Naive thymus-derived CD4-positive, alpha-beta T cell (primary cell): ENCODE measurements at regions of chr11 and their contacts with region 1.

Region 1: GRCh38 chr11:68459886-68460740 is 439 bp upstream of the PPP6R3 start:
- DNase-seq: peak; percentile 90 to 97 (median 96)
- ATAC-seq: peak; percentile 95
- H3K4me3 ChIP-seq: peak overlapping the region; percentile 86
- H3K4me3 Mint-ChIP-seq: peak overlapping the region; percentile 81 to 98 (median 96)
- H3K27ac ChIP-seq: peak overlapping the region; percentile 90
- H3K27ac Mint-ChIP-seq: peak overlapping the region; percentile 92 to 99 (median 99)
- H3K4me1 ChIP-seq: peaks cover 19 to 26% of the 10 kb centered on the region in 2 donors
- H3K4me1 Mint-ChIP-seq: peaks cover 26 to 45% (median 31%) of the 10 kb centered on the region in 7 donors
- H3K27me3 ChIP-seq: no peaks in the 10 kb centered on the region
- H3K27me3 Mint-ChIP-seq: peaks cover 0 to 2% (median 0%) of the 10 kb centered on the region in 5 donors

Region 2: DNA sequence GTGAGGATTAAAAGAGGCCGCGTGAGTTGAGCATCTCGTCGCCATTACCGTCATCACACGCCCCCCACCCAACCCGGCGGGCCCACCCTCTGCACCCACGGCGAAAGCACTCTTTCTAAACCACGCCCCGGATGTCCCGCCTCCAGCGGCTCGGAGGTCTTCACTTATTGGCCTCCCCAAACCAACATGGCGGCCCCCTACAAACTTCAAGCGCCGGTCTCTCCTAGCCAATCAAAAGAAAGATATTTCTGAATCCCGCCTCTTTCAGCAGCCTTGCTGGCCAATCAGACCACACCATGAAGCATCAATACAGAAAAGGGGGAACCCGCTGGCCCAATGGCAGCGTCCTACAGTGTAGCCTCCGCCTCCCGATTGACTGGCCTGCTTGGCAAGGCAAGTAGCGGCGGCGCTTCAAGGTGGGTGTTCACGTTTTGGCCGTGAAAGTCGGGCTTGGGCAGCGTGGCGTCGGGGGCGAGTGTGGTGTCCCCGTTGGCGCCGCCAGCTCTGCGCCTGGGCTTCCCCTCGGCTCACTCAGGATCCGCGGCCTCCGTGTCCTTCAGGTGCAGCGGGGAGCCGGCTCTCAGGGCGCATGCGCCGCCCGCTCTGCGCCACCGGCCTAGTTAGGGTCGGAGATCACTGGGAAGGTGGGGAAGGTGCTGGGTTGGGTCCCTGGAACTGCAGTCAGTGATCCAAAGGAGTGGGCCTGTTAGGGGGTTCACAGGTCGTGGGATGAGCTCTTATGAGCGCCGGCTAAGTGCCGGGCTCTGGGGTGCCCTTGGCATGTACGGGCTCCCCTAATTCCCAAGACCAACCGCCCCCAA is 429.6 kb before region 1 on chr11 and contains the start of gene NDUFS8:
- CTCF ChIA-PET with region 1: no interaction called
- POLR2A ChIA-PET with region 1: no interaction called
- intact Hi-C with region 1: loop called (anchors 1 to 2 kb)
- DNase-seq: peak; percentile 83 to 99 (median 98)
- ATAC-seq: peak; percentile 98
- H3K4me3 ChIP-seq: peak within 1 kb of the TSS; percentile 98
- H3K4me3 Mint-ChIP-seq: peak within 1 kb of the TSS; percentile 90 to 99 (median 96)
- H3K27ac ChIP-seq: peak within 1 kb of the TSS; percentile 97
- H3K27ac Mint-ChIP-seq: peak within 1 kb of the TSS; percentile 73 to 98 (median 92)
- H3K4me1 ChIP-seq: peaks cover 11 to 16% of the 10 kb centered on the region in 2 donors
- H3K4me1 Mint-ChIP-seq: peaks cover 12 to 32% (median 23%) of the 10 kb centered on the region in 7 donors
- H3K27me3 ChIP-seq: no peaks in the 10 kb centered on the region
- H3K27me3 Mint-ChIP-seq: no peaks in the 10 kb centered on the region
- total RNA-seq, gene NDUFS8: 67.1 to 126 (median 80.1) TPM

Region 3: DNA sequence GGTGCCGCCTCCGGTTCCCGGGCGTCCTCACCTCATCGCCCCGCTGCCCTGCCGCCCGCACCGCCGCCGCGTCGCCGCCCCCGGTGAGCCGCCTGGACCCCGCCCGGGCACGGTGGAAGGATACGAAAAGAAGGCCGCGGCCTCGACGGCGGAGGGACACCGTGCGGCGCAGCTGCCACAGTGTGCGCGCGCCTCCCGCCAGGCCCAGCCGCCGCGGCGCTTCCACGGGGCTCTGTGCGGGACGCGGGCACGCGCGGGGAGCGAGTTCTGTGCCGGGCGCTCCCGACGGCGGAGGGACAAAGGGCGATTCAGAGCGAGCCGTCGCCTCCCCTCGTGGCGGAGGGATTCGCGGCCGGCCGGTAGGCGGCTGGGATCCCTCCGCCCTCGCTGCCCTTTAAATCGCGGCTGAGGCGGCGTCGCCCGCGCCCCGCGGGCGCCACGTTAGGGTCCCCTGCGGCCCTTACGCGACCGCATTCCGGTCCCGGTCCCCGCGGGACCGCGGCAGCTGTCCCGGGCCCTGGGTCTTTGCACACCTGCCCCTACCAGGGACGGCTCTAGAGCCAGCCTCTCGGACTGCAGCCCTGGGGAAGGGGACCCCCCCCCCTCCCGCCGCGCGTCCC is 246.4 kb before region 1 on chr11:
- CTCF ChIA-PET with region 1: no interaction called
- POLR2A ChIA-PET with region 1: no interaction called
- intact Hi-C with region 1: loop called (anchors 1 to 5 kb)
- DNase-seq: peak; percentile 69 to 92 (median 86)
- ATAC-seq: peak; percentile 70
- H3K4me3 ChIP-seq: peak overlapping the region; percentile 81
- H3K4me3 Mint-ChIP-seq: peak overlapping the region; percentile 69 to 98 (median 78)
- H3K27ac ChIP-seq: peak overlapping the region; percentile 88
- H3K27ac Mint-ChIP-seq: peak overlapping the region in 7 of 9 donors; percentile 35 to 99 (median 92)
- H3K4me1 ChIP-seq: peaks cover 27% of the 10 kb centered on the region in 2 donors
- H3K4me1 Mint-ChIP-seq: peaks cover 35 to 50% (median 45%) of the 10 kb centered on the region in 7 donors
- H3K27me3 ChIP-seq: no peaks in the 10 kb centered on the region
- H3K27me3 Mint-ChIP-seq: peaks cover 0 to 28% (median 0%) of the 10 kb centered on the region in 5 donors

Region 4: GRCh38 chr11:68398995-68399851 is 60.9 kb before region 1 on chr11:
- CTCF ChIA-PET with region 1: no interaction called
- POLR2A ChIA-PET with region 1: no interaction called
- intact Hi-C with region 1: no loop called
- DNase-seq: no peak
- ATAC-seq: no peak
- H3K4me3 ChIP-seq: no peak overlapping the region
- H3K4me3 Mint-ChIP-seq: no peak overlapping the region
- H3K27ac ChIP-seq: no peak overlapping the region
- H3K27ac Mint-ChIP-seq: no peak overlapping the region
- H3K4me1 ChIP-seq: no peaks in the 10 kb centered on the region
- H3K4me1 Mint-ChIP-seq: peaks cover 0 to 2% (median 0%) of the 10 kb centered on the region in 7 donors
- H3K27me3 ChIP-seq: no peaks in the 10 kb centered on the region
- H3K27me3 Mint-ChIP-seq: no peaks in the 10 kb centered on the region

Region 5: DNA sequence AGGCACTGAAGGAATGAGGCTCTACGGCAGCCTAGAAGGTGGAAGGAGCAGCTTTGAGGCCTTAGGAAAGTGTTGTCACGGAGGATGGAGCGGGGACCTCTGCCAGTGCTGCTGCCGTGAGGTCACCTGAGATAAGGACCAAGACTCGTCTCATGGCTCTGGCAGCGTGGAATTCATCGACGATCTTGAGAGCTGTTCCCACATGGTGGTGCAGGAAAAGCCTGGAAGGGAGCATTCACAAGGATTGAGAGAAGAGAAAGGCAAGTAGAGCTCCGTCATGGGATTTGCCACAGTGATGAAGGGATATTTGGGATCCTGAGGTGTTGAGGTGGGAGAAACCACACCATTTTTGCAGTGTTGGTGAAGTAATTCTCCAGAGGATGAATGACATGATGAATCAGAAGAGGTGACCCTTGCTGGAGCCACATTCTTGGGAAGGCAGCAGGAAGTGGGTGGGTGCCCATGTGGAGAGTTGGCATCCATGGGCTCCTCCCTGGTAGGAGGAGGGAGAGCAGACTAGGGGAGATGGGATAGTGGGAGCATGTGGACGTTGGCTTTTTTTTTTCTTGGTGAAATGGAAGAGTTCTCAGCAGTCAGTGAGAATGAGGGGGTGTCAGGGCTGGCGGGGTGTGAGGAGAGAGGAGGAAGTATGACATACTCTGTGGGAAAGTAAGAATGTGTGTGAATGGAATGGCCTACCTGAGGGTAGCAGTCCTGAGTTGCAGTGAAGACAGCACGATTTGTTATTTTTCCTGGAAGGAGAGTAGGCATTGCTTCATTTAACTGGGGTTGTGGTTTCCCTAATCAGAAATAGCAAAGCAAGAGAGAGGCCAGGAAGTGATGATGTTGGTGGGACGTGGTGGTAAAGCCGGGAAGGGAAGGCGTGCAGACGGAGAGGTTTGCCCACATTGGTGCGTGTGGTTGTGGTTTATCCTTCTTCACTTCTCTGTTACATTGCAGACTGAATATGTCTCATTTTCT is 11.5 kb after region 1 on chr11:
- CTCF ChIA-PET with region 1: no interaction called
- POLR2A ChIA-PET with region 1: interaction called, 4 read pairs
- intact Hi-C with region 1: loop called (anchors 1 kb)
- DNase-seq: peak in 8 of 9 donors; percentile 28 to 63 (median 53)
- ATAC-seq: peak; percentile 84
- H3K4me3 ChIP-seq: peak overlapping the region; percentile 51
- H3K4me3 Mint-ChIP-seq: peak overlapping the region; percentile 68 to 87 (median 84)
- H3K27ac ChIP-seq: peak overlapping the region; percentile 53
- H3K27ac Mint-ChIP-seq: peak overlapping the region; percentile 74 to 94 (median 84)
- H3K4me1 ChIP-seq: peaks cover 60 to 64% of the 10 kb centered on the region in 2 donors
- H3K4me1 Mint-ChIP-seq: peaks cover 61 to 83% (median 76%) of the 10 kb centered on the region in 7 donors
- H3K27me3 ChIP-seq: no peaks in the 10 kb centered on the region
- H3K27me3 Mint-ChIP-seq: no peaks in the 10 kb centered on the region

Region 6: GRCh38 chr11:68550485-68550817 is 90.3 kb after region 1 on chr11:
- CTCF ChIA-PET with region 1: no interaction called
- POLR2A ChIA-PET with region 1: no interaction called
- intact Hi-C with region 1: loop called in 1 of 2 experiments (anchors 5 kb)
- DNase-seq: peak in 5 of 9 donors; percentile 13 to 44 (median 13)
- ATAC-seq: peak; percentile 57
- H3K4me3 ChIP-seq: no peak overlapping the region
- H3K4me3 Mint-ChIP-seq: peak overlapping the region; percentile 57 to 78 (median 69)
- H3K27ac ChIP-seq: peak overlapping the region; percentile 52
- H3K27ac Mint-ChIP-seq: peak overlapping the region; percentile 15 to 90 (median 79)
- H3K4me1 ChIP-seq: peaks cover 11 to 22% of the 10 kb centered on the region in 2 donors
- H3K4me1 Mint-ChIP-seq: peaks cover 50 to 91% (median 75%) of the 10 kb centered on the region in 7 donors
- H3K27me3 ChIP-seq: no peaks in the 10 kb centered on the region
- H3K27me3 Mint-ChIP-seq: no peaks in the 10 kb centered on the region

Region 7: GRCh38 chr11:68839054-68839865 is 379.1 kb after region 1 on chr11:
- CTCF ChIA-PET with region 1: no interaction called
- POLR2A ChIA-PET with region 1: no interaction called
- intact Hi-C with region 1: loop called (anchors 1 to 5 kb)
- DNase-seq: peak; percentile 87 to 94 (median 92)
- ATAC-seq: peak; percentile 88
- H3K4me3 ChIP-seq: peak overlapping the region; percentile 81
- H3K4me3 Mint-ChIP-seq: peak overlapping the region; percentile 85 to 93 (median 90)
- H3K27ac ChIP-seq: peak overlapping the region; percentile 73
- H3K27ac Mint-ChIP-seq: peak overlapping the region; percentile 81 to 95 (median 93)
- H3K4me1 ChIP-seq: peaks cover 49% of the 10 kb centered on the region in 2 donors
- H3K4me1 Mint-ChIP-seq: peaks cover 31 to 70% (median 52%) of the 10 kb centered on the region in 7 donors
- H3K27me3 ChIP-seq: no peaks in the 10 kb centered on the region
- H3K27me3 Mint-ChIP-seq: peaks cover 0 to 2% (median 0%) of the 10 kb centered on the region in 5 donors

Region 8: DNA sequence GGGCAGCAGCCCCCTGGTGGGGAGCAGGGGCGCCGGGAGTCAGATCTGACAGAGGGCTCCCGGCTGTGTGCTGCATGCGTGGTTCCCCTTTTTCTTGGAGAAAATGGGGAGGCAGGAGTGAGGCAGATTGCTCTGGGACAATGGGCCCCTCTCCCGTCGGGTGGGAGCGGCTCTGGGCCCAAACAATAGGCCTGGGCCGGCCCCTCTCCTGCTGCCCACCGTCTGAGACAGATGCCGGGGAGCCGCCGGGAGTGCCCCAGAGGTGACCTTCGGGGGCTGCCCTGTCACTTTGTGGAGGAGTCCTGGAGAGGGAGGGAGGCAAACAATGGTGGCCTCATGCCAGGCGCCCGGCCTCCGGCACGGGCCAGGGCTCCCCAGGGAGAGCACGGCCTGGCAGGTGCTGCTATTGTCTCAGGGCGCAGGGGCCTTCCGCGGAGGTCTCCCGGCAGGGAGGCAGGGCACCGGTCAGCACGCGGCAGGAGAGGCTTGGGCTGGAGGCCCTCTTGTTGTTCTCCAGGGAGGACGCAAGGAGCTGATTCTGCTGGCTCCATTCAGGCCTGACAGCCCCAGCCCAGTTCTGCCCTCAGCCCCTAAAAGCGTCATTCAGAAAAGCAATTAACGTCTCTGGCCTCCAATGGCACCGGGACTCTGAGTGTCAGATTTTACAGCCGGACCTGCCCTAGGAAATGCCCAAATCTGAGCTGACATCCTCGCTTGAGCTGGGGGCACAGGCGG is 740.4 kb after region 1 on chr11:
- CTCF ChIA-PET with region 1: no interaction called
- POLR2A ChIA-PET with region 1: no interaction called
- intact Hi-C with region 1: no loop called
- DNase-seq: no peak
- ATAC-seq: no peak
- H3K4me3 ChIP-seq: no peak overlapping the region
- H3K4me3 Mint-ChIP-seq: no peak overlapping the region
- H3K27ac ChIP-seq: no peak overlapping the region
- H3K27ac Mint-ChIP-seq: no peak overlapping the region
- H3K4me1 ChIP-seq: no peaks in the 10 kb centered on the region
- H3K4me1 Mint-ChIP-seq: peaks cover 0 to 13% (median 0%) of the 10 kb centered on the region in 7 donors
- H3K27me3 ChIP-seq: no peaks in the 10 kb centered on the region
- H3K27me3 Mint-ChIP-seq: peaks cover 0 to 5% (median 0%) of the 10 kb centered on the region in 5 donors

Region 9: DNA sequence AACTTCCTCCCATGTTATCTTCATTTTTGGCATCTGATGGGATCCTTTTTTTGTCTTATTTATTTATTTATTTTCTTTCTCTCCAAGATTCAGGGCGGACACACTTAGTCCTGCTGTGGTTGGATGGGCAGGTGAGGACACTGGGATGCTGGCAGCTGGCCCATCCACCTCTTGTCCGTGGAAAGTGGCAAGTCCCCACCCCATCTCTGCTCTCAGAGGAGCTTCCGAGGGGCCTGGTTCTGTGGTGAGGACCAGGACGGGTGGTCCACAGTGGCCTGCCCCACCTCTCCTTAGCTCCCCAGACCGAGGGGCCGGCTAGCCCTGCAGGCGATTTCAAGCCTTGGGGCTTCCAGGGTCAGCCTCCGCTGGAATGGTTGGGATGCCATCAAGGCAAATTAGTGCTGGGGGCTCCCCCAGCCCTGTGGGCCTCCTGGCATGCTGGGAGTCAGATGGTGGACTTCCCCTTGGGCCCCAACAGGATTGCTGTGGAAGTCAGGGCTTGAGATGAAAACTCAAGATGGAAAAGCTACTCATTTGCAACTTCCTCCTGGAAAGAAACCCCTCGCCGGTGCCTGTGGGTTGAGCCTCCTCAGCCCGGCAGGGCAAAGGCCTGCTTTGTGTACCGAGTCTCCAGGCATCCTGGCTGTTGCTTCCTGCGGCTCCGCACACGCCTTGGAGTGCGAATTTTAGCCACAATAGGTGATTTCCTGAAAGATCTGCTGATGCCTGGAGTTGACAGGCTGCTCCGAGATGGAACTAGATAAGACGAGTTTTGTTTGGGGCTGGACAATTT is 990.1 kb after region 1 on chr11:
- CTCF ChIA-PET with region 1: no interaction called
- POLR2A ChIA-PET with region 1: no interaction called
- intact Hi-C with region 1: no loop called
- DNase-seq: no peak
- ATAC-seq: no peak
- H3K4me3 ChIP-seq: no peak overlapping the region
- H3K4me3 Mint-ChIP-seq: no peak overlapping the region
- H3K27ac ChIP-seq: no peak overlapping the region
- H3K27ac Mint-ChIP-seq: no peak overlapping the region
- H3K4me1 ChIP-seq: no peaks in the 10 kb centered on the region
- H3K4me1 Mint-ChIP-seq: peaks cover 0 to 6% (median 0%) of the 10 kb centered on the region in 7 donors
- H3K27me3 ChIP-seq: no peaks in the 10 kb centered on the region
- H3K27me3 Mint-ChIP-seq: peaks cover 11 to 23% (median 19%) of the 10 kb centered on the region in 5 donors